ENCODE measurements at regions of chr3 and their contacts with region 1.

Region 1: GRCh38 chr3:171809821-171810628 is at the start of gene PLD1:
- DNase-seq: peak; percentile 86 to 95
- H3K4me3 ChIP-seq: peak within 1 kb of the TSS; percentile 61
- H3K27ac ChIP-seq: peak within 1 kb of the TSS; percentile 98
- H3K4me1 ChIP-seq: peaks cover 75% of the 10 kb centered on the region
- H3K27me3 ChIP-seq: no peaks in the 10 kb centered on the region
- CTCF ChIP-seq: no peak
- total RNA-seq, gene PLD1: 32.5 and 33.3 TPM in 2 replicates

Region 2: GRCh38 chr3:171459942-171460724 is 349.9 kb before region 1 on chr3 and contains the start of gene TNIK:
- CTCF ChIA-PET with region 1: no interaction called
- POLR2A ChIA-PET with region 1: no interaction called
- intact Hi-C with region 1: loop called (anchors 10 kb)
- DNase-seq: peak; percentile 87 to 94
- H3K4me3 ChIP-seq: peak within 1 kb of the TSS; percentile 69
- H3K27ac ChIP-seq: peak within 1 kb of the TSS; percentile 50
- H3K4me1 ChIP-seq: peaks cover 46% of the 10 kb centered on the region
- H3K27me3 ChIP-seq: no peaks in the 10 kb centered on the region
- CTCF ChIP-seq: peak; percentile 38; the same call in 1 of the 2 replicates
- total RNA-seq, gene TNIK: 28.8 and 30.7 TPM in 2 replicates

Region 3: DNA sequence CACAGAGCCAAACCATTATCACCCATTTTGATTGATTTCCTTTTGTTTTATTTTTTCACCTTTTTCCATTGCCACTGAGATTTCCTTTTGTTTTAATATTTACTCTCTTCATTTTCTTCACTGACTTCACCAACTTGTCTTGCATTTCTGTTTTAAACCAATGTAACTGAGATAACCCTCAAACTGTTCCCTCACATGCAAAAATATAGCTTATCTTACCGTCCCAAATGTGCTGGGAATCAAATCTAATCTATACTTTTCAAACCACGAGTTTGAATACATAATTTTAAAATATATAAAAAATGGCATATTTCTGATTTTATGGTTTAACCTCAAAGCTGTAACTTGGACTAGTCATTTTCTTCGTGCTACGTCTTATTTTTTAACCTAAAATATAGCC is 143.5 kb before region 1 on chr3:
- CTCF ChIA-PET with region 1: no interaction called
- POLR2A ChIA-PET with region 1: no interaction called
- intact Hi-C with region 1: no loop called
- DNase-seq: no peak
- H3K4me3 ChIP-seq: no peak overlapping the region
- H3K27ac ChIP-seq: no peak overlapping the region
- H3K4me1 ChIP-seq: no peaks in the 10 kb centered on the region
- H3K27me3 ChIP-seq: no peaks in the 10 kb centered on the region
- CTCF ChIP-seq: no peak

Region 4: DNA sequence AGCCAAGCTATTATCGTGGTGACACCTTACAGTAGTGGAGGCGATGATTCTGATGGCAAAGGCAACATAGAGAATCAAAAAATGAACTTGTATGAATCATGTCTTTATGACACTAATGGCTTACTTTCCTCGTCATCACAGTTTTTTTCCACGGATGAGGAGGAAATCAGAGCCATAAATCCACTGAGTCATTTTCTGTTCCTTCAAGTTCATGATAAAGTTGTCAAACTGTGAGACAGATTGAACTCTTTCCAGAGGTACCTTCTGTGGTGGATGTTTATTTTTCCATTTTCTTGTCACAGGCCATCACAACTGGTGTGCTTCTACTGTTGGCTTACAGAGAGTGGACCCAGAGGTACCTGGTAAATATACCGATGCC is 41.6 kb after region 1 on chr3:
- CTCF ChIA-PET with region 1: no interaction called
- POLR2A ChIA-PET with region 1: no interaction called
- intact Hi-C with region 1: no loop called
- DNase-seq: peak in 1 of 2 experiments; percentile 35
- H3K4me3 ChIP-seq: no peak overlapping the region
- H3K27ac ChIP-seq: no peak overlapping the region
- H3K4me1 ChIP-seq: no peaks in the 10 kb centered on the region
- H3K27me3 ChIP-seq: no peaks in the 10 kb centered on the region
- CTCF ChIP-seq: no peak

Region 5: GRCh38 chr3:171874251-171874679 is 64.2 kb after region 1 on chr3:
- CTCF ChIA-PET with region 1: no interaction called
- POLR2A ChIA-PET with region 1: interaction called, 5 read pairs
- intact Hi-C with region 1: loop called (anchors 2 kb)
- DNase-seq: peak; percentile 44 to 49
- H3K4me3 ChIP-seq: no peak overlapping the region
- H3K27ac ChIP-seq: 0 out of 2 replicates have a peak overlapping the region, but pooled peaks have one; percentile 0
- H3K4me1 ChIP-seq: peaks cover 15% of the 10 kb centered on the region; the same call in 1 of the 2 replicates
- H3K27me3 ChIP-seq: no peaks in the 10 kb centered on the region
- CTCF ChIP-seq: no peak

Region 6: DNA sequence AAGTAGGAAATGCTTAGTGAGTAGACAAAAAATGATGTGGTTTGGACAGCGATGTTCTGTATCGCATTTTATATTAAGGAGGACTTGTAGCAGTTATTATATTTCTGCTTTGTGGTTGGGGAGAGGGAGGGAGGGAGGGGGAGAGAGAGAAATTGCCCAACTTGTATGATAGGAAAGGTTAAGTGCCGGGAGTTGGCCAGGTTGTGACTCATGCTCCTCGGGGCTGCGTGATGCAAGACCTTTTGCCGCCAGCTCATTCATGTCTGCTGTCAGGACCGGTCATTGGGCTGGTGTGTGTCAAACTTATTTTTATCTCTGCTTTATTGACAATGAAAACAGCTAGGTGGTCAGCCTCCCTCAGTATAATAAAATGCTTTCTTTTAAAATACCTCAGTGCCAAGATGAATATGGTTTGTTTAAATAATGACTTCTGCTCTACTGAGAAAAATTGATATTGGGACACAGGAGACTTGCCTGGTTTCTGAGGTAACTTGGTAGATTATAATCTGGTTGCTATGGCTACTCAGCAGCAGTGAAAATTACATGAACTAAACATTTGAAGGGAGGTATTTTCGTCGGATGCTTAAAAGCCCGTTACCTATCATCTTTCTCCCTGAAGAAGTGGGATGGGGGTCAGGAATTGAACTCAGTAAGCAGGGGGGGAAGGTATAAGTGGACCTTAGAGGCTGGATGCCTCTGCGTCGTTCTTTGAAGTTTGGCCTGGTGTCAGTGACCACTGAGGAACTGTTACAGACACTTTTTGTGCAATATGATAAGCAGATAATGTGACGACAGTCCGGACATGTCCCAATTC is 320.1 kb after region 1 on chr3:
- CTCF ChIA-PET with region 1: no interaction called
- POLR2A ChIA-PET with region 1: no interaction called
- intact Hi-C with region 1: loop called (anchors 5 kb)
- DNase-seq: peak; percentile 95 to 99
- H3K4me3 ChIP-seq: peak overlapping the region; percentile 11
- H3K27ac ChIP-seq: peak overlapping the region; percentile 78
- H3K4me1 ChIP-seq: peaks cover 97% of the 10 kb centered on the region
- H3K27me3 ChIP-seq: no peaks in the 10 kb centered on the region
- CTCF ChIP-seq: no peak

Region 7: DNA sequence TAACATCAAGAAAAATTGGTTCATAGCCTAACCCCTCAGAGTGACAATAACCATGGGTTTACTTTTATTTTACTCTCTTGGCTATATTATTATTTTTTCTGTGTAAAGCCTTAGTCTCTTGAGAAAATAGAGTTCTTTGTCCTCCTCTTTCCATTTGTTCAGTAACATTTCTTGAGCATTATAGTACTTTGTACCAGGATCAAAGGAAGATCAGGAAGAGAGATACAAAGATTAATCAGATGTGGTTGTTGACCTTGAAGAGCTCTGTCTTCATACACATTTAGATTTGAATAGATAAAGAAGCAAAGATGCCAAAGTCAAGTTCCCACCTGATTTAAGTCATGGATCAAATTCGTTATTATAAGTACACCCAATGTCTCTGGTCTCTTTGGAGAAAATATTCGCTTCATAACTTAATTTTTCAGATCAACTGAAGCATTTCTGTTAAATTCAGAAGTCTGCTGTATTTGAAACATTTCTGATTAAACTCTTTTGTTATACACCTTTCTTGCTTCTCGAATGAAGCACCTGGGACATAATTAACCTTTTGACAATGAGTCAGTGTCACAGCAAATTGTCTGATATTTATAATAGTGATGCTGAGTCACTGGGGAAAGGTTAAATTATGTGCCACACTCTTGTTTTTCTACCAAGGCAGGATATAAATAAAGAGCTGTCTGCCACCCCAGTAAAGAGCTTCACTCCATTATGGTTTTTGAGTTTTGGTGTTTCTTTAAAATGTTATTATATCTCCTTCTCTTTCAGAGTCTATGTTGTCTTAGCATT is 538.1 kb after region 1 on chr3:
- CTCF ChIA-PET with region 1: no interaction called
- POLR2A ChIA-PET with region 1: interaction called, 11 read pairs
- intact Hi-C with region 1: no loop called
- DNase-seq: peak in 1 of 2 experiments; percentile 74
- H3K4me3 ChIP-seq: no peak overlapping the region
- H3K27ac ChIP-seq: peak overlapping the region; percentile 68
- H3K4me1 ChIP-seq: peaks cover 31% of the 10 kb centered on the region
- H3K27me3 ChIP-seq: no peaks in the 10 kb centered on the region
- CTCF ChIP-seq: no peak